WTC11 (cell line): ENCODE measurements at regions of chr9 and their contacts with region 1.

Region 1: GRCh38 chr9:91036826-91037510 is 235.3 kb downstream of the SYK start:
- DNase-seq: peak; percentile 78
- ATAC-seq: peak; percentile 93
- H3K4me3 Mint-ChIP-seq: no peak overlapping the region
- H3K27ac Mint-ChIP-seq: no peak overlapping the region
- H3K4me1 Mint-ChIP-seq: peaks cover 26% of the 10 kb centered on the region
- H3K27me3 Mint-ChIP-seq: no peaks in the 10 kb centered on the region
- CTCF ChIP-seq: no peak

Region 2: DNA sequence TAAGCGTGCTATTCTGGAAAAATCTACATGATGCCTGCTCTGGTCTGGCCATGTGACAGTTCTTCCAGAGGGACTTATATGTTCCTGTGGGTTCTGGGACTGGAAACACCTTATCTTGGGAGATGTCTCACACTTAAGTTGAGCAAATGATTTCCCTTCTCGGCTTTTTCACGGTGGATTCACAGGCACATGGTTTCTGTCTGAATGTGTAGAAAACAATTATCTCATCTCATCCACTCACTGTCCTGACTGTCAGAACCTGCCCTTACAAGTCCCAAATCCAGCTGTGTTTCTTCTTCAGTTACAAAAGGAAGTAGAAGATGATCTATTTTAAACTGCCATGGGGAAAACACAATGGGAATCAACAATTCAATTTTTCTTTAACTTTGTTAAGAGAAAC is 51.3 kb before region 1 on chr9:
- CTCF ChIA-PET with region 1: interaction called, 11 read pairs
- POLR2A ChIA-PET with region 1: no interaction called
- DNase-seq: no peak
- ATAC-seq: no peak
- H3K4me3 Mint-ChIP-seq: no peak overlapping the region
- H3K27ac Mint-ChIP-seq: no peak overlapping the region
- H3K4me1 Mint-ChIP-seq: peaks cover 9% of the 10 kb centered on the region
- H3K27me3 Mint-ChIP-seq: no peaks in the 10 kb centered on the region
- CTCF ChIP-seq: no peak

Region 3: DNA sequence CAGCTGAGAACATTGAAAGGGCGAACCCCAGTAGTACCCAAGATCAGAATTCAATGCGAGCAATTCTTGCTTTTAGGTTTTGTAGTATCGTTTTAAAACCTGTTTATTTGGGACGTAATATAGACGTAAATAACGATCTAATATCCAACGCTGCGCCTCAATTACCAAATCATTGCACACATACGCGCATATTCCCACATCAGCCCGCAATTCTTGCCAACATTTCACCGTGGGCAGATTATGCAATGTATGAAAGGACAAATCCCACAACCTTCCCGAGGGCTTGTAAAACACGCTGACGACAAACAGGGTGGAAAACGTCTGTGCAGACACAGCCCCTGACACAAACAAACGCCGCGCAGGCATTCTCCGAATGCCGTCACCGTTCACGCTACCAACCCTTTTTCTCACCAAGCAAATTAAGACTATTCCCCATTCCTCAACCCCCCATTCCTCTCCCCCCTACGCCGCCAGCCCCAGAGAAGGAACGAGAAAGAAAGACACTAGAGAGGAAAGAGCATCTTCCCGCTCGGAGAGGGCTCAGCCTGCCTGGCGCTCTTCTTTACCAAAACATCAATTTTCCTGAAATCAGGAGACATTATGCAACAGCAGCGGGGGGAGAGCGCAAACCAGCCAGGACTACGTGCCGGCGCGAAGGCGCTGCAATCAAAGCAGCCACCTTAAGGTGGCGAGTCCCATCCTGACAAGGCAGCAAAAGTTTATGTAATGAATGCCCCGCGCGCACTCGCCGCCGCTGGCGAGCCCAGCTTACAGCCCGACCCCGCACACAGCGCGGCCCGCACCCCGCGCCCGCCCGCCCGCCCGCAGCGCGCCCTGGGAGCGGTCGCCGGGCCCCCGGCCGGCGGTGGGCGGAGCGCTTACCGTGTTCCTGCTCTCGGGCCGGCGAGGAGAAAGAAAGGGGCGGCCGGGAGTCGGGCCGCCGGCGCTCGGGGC is 386.1 kb after region 1 on chr9:
- CTCF ChIA-PET with region 1: interaction called, 33 read pairs
- POLR2A ChIA-PET with region 1: no interaction called
- DNase-seq: peak; percentile 48
- ATAC-seq: peak; percentile 11
- H3K4me3 Mint-ChIP-seq: peak overlapping the region; percentile 99
- H3K27ac Mint-ChIP-seq: peak overlapping the region; percentile 94
- H3K4me1 Mint-ChIP-seq: peaks cover 42% of the 10 kb centered on the region
- H3K27me3 Mint-ChIP-seq: peaks cover 52% of the 10 kb centered on the region
- CTCF ChIP-seq: no peak